Mucosa of descending colon (tissue), 3 donors: ENCODE measurements at regions of chr10 and their contacts with region 1.

Region 1: GRCh38 chr10:86399879-86400704 is 33.5 kb upstream of the GRID1 start:
- DNase-seq: peak; percentile 97
- ATAC-seq: peak; percentile 92
- H3K4me3 ChIP-seq: peak overlapping the region; percentile 20
- H3K4me1 ChIP-seq: peaks cover 15% of the 10 kb centered on the region
- CTCF ChIP-seq: peak; percentile 91

Region 2: GRCh38 chr10:85995791-85996190 is 404.3 kb before region 1 on chr10:
- intact Hi-C with region 1: no loop called
- DNase-seq: peak in 1 of 3 donors; percentile 40
- ATAC-seq: no peak
- H3K4me3 ChIP-seq: no peak overlapping the region
- H3K4me1 ChIP-seq: no peaks in the 10 kb centered on the region
- CTCF ChIP-seq: no peak

Region 3: DNA sequence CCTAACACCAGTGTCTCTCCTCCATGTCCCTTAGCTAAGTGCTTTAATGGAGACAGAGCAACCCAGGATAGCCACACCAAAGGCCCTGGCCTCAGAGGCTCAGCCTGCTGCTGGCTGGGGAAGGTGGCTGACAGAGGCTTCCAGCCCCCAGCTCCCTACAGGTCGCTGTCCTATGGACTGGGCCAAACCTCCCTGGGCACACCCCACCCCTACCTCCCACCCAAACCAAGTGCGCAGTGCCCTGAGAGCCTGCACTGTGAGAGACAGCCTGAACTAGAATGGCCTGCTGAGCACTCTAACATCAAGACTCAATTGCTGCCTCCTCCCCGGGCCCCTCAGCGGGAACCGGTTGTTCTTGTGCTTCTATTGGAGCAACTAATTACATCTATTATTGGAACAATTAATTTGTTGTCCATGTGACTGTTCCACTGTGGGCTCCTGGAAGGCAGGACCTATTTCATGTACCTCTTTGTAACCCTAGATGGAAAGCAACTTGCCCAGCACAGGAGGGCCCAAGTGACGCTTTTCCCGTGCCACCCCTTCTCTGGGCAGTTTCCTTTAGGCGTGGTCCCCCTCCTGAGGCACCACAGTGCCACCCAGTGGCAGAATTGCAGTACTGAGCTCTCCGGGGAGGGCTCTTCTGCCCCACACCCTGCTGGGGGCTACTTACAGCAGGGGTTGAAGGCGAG is 185.1 kb after region 1 on chr10:
- intact Hi-C with region 1: loop called (anchors 5 to 10 kb)
- DNase-seq: peak; percentile 70 to 83 (median 75)
- ATAC-seq: peak; percentile 98
- H3K4me3 ChIP-seq: no peak overlapping the region
- H3K4me1 ChIP-seq: no peaks in the 10 kb centered on the region
- CTCF ChIP-seq: peak; percentile 84

Region 4: GRCh38 chr10:86710987-86711512 is 311.0 kb after region 1 on chr10:
- intact Hi-C with region 1: no loop called
- DNase-seq: peak; percentile 88 to 96 (median 92)
- ATAC-seq: peak; percentile 98
- H3K4me3 ChIP-seq: peak overlapping the region; percentile 70
- H3K4me1 ChIP-seq: peaks cover 11% of the 10 kb centered on the region
- CTCF ChIP-seq: peak; percentile 92